ENCODE measurements at regions of chr3 and their contacts with region 1.

Region 1: GRCh38 chr3:86774082-86774691 is 216.8 kb downstream of the VGLL3 start:
- DNase-seq: no peak
- H3K4me3 ChIP-seq: no peak overlapping the region
- H3K27ac ChIP-seq: no peak overlapping the region
- H3K4me1 ChIP-seq: no peaks in the 10 kb centered on the region
- H3K27me3 ChIP-seq: no peaks in the 10 kb centered on the region
- CTCF ChIP-seq: peak in 3 of 4 experiments; percentile 39 to 56 (median 54)
- POLR2A ChIP-seq: no peak

Region 2: DNA sequence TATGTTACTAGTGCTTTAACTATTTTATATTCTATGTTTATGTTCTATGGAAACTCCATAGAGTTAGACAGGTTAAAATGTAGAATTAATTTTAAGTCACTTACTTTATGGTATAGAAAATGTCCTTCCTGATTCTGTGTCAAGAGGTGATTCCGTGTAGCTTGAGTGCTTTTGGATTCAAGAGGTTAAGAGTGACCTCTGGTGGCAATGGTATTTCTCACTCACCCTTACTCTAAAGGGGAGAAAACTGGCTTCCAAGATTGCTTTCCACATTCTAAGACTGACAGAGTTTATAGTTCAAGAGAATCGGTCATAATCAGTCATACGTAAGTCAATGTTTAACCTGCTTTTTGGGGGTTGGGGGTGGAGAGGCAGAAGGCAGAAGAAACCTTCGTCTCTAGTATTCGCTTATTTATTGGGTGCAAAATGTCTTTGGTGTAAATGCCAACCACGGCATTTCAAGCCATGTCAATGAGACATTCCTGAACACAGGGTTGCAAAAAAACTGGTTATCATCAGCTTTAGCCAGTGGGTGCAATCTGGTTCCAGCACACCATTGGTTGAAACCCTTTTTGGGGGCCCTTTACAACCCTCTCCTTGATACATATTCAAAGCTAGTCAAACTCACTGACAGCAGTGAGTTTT is 308.7 kb after region 1 on chr3:
- intact Hi-C with region 1: loop called (anchors 2 kb)
- DNase-seq: peak; percentile 50
- H3K4me3 ChIP-seq: no peak overlapping the region
- H3K27ac ChIP-seq: no peak overlapping the region
- H3K4me1 ChIP-seq: no peaks in the 10 kb centered on the region
- H3K27me3 ChIP-seq: no peaks in the 10 kb centered on the region
- CTCF ChIP-seq: peak in 3 of 4 experiments; percentile 66 to 67 (median 66)
- POLR2A ChIP-seq: no peak

Region 3: DNA sequence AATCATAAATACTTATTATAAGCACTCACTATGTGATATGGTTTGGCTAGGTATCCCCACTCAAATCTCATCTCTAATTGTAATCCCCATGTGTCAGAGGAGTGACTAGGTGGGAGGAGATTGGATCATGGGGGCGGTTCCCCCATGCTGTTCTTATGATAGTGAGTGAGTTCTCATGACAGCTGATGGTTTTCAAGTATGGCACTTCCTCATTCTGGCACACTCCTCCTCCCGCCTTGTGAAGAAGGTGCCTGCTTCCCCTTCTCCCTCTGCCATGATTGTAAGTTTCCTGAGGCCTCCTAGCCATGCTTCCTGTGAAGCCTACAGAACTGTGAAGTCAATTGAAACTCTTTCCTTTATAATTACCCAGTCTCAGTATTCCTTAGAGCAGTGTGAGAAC is 399.6 kb after region 1 on chr3:
- intact Hi-C with region 1: loop called (anchors 5 kb)
- DNase-seq: no peak
- H3K4me3 ChIP-seq: no peak overlapping the region
- H3K27ac ChIP-seq: no peak overlapping the region
- H3K4me1 ChIP-seq: no peaks in the 10 kb centered on the region
- H3K27me3 ChIP-seq: no peaks in the 10 kb centered on the region
- CTCF ChIP-seq: no peak
- POLR2A ChIP-seq: no peak